ENCODE measurements at regions of chr1 and their contacts with region 1.

Region 1: GRCh38 chr1:39214998-39215873 is 10.7 kb downstream of the MACF1 start:
- DNase-seq: no peak
- H3K4me3 ChIP-seq: no peak overlapping the region
- H3K27me3 ChIP-seq: no peaks in the 10 kb centered on the region
- CTCF ChIP-seq: no peak

Region 2: DNA sequence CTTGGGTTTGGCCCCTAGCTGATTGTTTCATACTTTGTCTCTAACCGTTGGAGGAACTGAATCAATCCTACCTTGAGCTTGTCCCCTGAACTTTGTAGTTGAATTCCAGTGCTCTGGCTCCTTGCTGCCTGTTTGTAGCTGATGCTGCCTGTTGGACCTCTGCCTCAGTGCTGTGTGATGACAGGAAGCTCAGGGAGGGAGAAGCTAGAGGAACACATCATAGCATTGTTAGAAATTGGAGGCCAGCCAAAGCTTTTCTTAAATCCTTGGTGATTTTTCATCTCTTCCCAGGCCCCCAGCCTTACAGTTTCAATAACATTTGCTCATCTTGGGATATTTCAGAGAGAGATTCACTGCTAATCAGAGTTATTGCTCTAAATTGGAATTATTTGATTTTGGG is 23.2 kb after region 1 on chr1:
- CTCF ChIA-PET with region 1: interaction called, 3 read pairs
- POLR2A ChIA-PET with region 1: interaction called, 14 read pairs
- DNase-seq: no peak
- H3K4me3 ChIP-seq: no peak overlapping the region
- H3K27me3 ChIP-seq: no peaks in the 10 kb centered on the region
- CTCF ChIP-seq: no peak